Ovary (tissue), 10 donors: ENCODE measurements at regions of chr21 and their contacts with region 1.

Region 1: DNA sequence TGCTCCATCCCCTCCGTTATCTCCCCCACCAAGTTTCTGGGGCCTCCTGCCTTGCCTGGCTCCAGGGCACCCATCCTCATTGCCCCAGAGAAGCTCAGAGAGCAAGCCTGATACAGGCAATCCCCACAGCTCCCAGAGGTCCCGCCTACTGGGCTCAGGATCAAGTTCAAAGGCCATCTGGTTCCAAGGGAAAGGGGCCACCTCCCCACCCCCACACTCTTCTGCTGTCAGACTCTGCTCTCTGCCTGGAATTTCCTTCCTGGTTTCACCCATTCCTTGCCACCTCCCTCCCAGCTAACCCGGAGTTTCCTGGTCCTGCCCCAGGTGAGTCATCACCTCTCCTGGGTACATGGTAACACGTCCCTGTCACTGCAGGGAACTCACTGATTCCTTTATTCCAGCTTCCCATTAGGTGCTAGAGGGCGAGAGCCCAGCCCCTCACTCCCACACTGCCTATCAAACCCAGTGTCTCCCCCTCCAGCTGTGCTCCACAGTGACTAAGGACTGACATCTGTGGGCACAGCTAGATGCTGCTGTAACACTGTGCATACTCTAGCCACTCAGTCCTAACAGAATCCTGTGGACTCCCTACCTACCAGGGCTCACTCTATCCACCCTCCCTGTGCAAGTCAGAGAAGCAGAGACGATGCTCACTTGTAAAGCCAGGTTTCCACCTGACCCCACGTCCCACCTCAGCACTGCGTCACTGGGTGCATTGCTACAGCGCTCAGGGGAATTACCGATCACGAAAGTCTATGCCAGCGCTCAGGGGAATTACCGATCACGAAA is 21.8 kb downstream of the RSPH1 start:
- DNase-seq: no peak
- H3K4me3 ChIP-seq: no peak overlapping the region
- H3K27ac ChIP-seq: no peak overlapping the region
- H3K4me1 ChIP-seq: no peaks in the 10 kb centered on the region
- H3K27me3 ChIP-seq: no peaks in the 10 kb centered on the region
- CTCF ChIP-seq: no peak
- EP300 ChIP-seq: no peak
- POLR2A ChIP-seq: no peak

Region 2: GRCh38 chr21:42424914-42425541 is 49.2 kb before region 1 on chr21:
- intact Hi-C with region 1: loop called in 1 of 4 experiments (anchors 5 kb)
- DNase-seq: no peak
- H3K4me3 ChIP-seq: no peak overlapping the region
- H3K27ac ChIP-seq: no peak overlapping the region
- H3K4me1 ChIP-seq: no peaks in the 10 kb centered on the region
- H3K27me3 ChIP-seq: no peaks in the 10 kb centered on the region
- CTCF ChIP-seq: no peak
- EP300 ChIP-seq: no peak
- POLR2A ChIP-seq: no peak

Region 3: DNA sequence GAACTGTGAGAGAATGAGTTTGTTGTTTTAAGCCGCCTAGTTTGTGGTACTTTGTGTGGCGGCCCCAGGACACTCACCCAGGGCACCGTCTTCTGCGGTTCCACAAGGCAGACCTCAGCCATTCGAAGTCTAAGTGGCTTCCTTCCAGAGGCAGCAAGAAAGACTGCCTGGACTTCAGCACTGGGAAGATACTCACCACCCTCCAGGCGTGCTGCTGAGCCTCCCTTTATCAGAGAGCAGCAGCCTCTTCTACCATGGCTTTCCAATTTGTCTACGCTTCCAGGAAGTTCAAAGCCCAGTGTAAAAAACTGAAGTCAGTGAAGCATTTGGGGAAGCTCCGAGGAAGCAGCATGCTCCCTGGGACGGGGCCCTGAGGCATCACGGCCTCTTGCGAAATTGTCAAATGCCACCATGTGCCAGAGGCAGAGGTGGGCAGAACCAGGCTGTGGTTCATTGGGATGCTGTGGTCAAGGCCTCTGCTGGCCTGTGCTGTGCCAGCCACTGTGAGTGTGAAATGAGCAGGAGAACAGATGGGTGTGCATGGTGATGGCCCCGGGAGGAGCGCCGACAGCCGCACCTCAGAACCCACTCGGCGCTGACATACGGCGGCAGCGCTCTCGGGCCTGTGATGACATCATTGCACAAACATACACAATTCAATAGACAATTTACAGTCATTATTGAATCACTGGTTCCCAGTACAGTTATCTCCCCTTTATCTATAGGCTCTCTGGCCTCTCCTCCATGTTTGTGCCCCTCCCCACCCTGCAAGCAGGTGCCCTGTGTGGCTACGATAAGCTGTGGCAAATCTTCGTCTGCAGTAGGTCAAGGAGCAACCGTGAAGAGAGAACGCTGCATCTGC is 289.6 kb after region 1 on chr21:
- intact Hi-C with region 1: no loop called
- DNase-seq: no peak
- H3K4me3 ChIP-seq: no peak overlapping the region
- H3K27ac ChIP-seq: no peak overlapping the region
- H3K4me1 ChIP-seq: no peaks in the 10 kb centered on the region
- H3K27me3 ChIP-seq: no peaks in the 10 kb centered on the region
- CTCF ChIP-seq: no peak
- EP300 ChIP-seq: no peak
- POLR2A ChIP-seq: no peak